ENCODE measurements at regions of chr14 and their contacts with region 1.

Region 1: DNA sequence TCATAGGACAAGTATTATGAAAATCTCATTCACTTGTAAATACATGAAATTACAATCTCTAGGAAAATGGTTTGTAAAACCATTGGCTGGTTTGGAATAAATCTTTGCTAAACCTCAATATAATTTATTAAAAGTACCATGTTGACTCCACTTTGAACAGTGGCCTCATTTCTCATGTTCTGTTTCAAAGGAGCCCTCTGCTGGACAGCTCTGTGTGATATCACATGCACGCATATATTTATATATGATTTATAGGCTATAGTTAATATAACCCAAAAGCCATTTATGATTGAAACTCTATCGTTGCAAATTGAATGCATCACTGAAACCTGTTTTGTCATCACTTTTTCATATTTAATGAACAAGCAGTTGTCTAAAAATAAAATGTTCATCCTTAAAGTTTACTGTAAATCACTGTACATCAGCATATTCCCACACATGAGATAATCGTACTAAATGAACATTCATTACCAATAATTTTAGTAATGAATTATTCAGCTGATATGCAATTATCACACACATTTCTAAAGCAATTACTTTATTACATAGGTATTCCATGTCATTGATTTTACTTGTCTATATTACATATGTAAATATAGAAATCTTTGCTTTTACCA is 493.8 kb downstream of the NPAS3 start:
- DNase-seq: peak in 1 of 2 experiments; percentile 6
- H3K4me3 ChIP-seq: no peak overlapping the region
- H3K27ac ChIP-seq: no peak overlapping the region
- H3K4me1 ChIP-seq: no peaks in the 10 kb centered on the region
- H3K27me3 ChIP-seq: no peaks in the 10 kb centered on the region
- CTCF ChIP-seq: peak; percentile 60

Region 2: GRCh38 chr14:32593290-32593942 is 839.1 kb before region 1 on chr14:
- CTCF ChIA-PET with region 1: no interaction called
- POLR2A ChIA-PET with region 1: no interaction called
- intact Hi-C with region 1: loop called (anchors 10 kb)
- DNase-seq: no peak
- H3K4me3 ChIP-seq: no peak overlapping the region
- H3K27ac ChIP-seq: no peak overlapping the region
- H3K4me1 ChIP-seq: no peaks in the 10 kb centered on the region
- H3K27me3 ChIP-seq: no peaks in the 10 kb centered on the region
- CTCF ChIP-seq: no peak

Region 3: DNA sequence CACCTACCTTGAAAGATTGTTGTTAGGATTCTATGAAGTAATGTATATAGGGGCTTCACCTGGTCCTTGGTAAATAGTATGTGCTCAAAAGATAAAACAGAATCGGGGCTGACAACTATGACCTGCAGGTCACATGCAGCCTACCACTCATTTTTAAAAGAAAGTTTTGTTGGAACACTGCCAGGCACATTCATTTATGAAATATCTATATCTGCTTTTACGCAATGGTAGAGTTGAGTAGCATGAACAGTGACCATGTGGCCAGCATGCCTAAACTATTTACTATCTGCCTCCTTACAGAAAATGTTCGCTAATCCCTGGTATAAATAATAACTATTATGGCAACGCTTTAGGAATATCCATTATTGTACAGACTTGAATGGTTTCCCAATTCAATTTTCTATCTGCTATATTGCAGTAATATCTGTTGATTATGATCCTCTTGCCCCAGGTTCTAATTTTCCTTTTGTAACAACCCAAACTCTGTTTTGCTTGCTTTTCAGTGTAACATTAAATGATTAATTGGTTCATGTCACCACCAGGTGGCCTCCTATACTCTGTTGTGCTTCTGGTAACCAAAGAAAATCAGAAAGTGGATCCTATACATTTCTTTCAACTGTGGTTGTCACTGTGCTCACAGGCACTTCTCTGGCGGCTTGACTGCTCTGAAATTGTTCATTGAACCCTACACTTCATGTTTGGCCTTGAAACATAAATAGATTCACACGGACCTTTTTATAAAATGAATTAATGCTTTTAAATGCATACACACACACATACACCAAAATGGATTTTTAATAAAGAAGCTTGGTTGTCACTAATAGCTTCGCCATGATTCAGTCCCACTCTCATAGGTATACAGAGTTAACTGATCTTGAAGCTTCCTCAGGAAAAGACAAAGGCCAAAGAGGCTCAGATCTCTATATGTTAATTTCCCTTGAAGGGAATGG is 721.5 kb before region 1 on chr14:
- CTCF ChIA-PET with region 1: no interaction called
- POLR2A ChIA-PET with region 1: no interaction called
- intact Hi-C with region 1: loop called (anchors 1 kb)
- DNase-seq: no peak
- H3K4me3 ChIP-seq: no peak overlapping the region
- H3K27ac ChIP-seq: no peak overlapping the region
- H3K4me1 ChIP-seq: no peaks in the 10 kb centered on the region
- H3K27me3 ChIP-seq: no peaks in the 10 kb centered on the region
- CTCF ChIP-seq: peak; percentile 72

Region 4: DNA sequence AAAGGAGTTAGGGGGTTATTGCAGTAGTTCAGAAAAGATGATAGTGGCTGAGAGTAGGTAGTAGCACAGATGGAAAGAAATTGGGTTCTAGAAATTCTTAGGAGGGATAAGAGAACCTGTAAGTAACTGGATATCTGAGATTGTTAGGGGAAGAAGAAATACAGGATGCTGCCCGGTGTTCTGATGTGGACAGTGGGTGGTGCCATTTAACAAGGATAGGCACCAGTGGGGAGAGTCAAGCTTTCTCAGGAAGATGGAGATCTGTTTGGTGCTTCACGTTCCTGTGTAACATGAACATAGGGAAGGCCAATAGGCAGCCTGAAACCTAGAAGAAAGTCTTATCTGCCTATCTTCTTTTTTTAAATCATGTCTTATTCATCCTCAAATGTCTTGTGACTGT is 247.9 kb before region 1 on chr14:
- CTCF ChIA-PET with region 1: no interaction called
- POLR2A ChIA-PET with region 1: no interaction called
- intact Hi-C with region 1: loop called (anchors 10 kb)
- DNase-seq: no peak
- H3K4me3 ChIP-seq: no peak overlapping the region
- H3K27ac ChIP-seq: no peak overlapping the region
- H3K4me1 ChIP-seq: no peaks in the 10 kb centered on the region
- H3K27me3 ChIP-seq: no peaks in the 10 kb centered on the region
- CTCF ChIP-seq: no peak; the same call in 1 of the 2 replicates

Region 5: DNA sequence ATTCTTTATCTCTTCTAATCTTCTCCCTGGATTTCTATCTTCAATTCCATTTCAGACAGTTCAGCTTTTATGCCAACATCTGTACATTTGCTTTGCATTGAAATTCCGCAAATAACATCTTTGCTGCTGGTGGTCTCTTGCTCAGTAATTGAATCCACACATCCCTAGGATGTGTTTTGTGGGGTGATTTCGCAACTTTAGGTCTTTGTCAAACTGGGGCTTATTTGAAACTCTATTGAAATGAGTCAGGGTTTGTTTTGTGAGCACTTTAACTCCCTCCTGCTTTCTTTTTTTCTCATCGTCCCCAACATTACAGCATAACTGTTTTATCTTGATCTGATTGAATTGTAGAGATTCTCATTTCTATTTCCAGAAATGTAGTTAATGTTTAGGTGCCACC is 89.5 kb before region 1 on chr14:
- CTCF ChIA-PET with region 1: no interaction called
- POLR2A ChIA-PET with region 1: no interaction called
- intact Hi-C with region 1: no loop called
- DNase-seq: no peak
- H3K4me3 ChIP-seq: no peak overlapping the region
- H3K27ac ChIP-seq: no peak overlapping the region
- H3K4me1 ChIP-seq: no peaks in the 10 kb centered on the region
- H3K27me3 ChIP-seq: no peaks in the 10 kb centered on the region
- CTCF ChIP-seq: no peak